CD8-positive, alpha-beta T cell (primary cell): ENCODE measurements at regions of chr18 and their contacts with region 1.

Region 1: GRCh38 chr18:46073474-46074331 is 1.6 kb upstream of the PSTPIP2 start:
- DNase-seq: peak in 8 of 9 experiments; percentile 27 to 79 (median 56)
- ATAC-seq: peak; percentile 66
- H3K4me3 ChIP-seq: no peak overlapping the region
- H3K4me3 Mint-ChIP-seq: peak overlapping the region; percentile 86
- H3K27ac ChIP-seq: no peak overlapping the region
- H3K27ac Mint-ChIP-seq: no peak overlapping the region
- H3K4me1 ChIP-seq: peaks cover 21% of the 10 kb centered on the region
- H3K4me1 Mint-ChIP-seq: peaks cover 40% of the 10 kb centered on the region
- H3K27me3 ChIP-seq: no peaks in the 10 kb centered on the region
- H3K27me3 Mint-ChIP-seq: no peaks in the 10 kb centered on the region
- CTCF ChIP-seq: peak; percentile 89

Region 2: DNA sequence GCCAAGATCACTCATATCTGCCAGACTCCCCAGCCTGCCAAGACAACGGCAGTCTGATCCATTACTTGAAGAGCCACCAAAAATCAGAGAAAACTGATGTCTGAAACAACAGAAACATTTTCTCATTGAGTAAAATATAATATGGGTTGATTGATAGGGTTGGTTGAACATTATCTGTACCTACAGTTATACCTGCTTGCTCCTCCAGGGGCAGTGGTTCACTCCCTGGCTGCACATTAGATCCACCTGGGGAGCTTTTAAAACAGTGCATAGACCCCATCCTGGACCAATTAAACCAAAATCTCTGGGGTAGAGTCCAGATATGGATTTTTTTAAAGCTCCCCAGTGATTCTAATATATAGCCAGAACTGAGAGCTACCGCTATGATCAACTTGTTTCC is 502.0 kb before region 1 on chr18:
- CTCF ChIA-PET with region 1: no interaction called
- POLR2A ChIA-PET with region 1: no interaction called
- intact Hi-C with region 1: no loop called
- DNase-seq: no peak
- ATAC-seq: no peak
- H3K4me3 ChIP-seq: no peak overlapping the region
- H3K4me3 Mint-ChIP-seq: no peak overlapping the region
- H3K27ac ChIP-seq: no peak overlapping the region
- H3K27ac Mint-ChIP-seq: no peak overlapping the region
- H3K4me1 ChIP-seq: no peaks in the 10 kb centered on the region
- H3K4me1 Mint-ChIP-seq: no peaks in the 10 kb centered on the region
- H3K27me3 ChIP-seq: no peaks in the 10 kb centered on the region
- H3K27me3 Mint-ChIP-seq: peaks cover 8% of the 10 kb centered on the region
- CTCF ChIP-seq: no peak

Region 3: GRCh38 chr18:45664824-45665763 is 408.6 kb before region 1 on chr18:
- CTCF ChIA-PET with region 1: interaction called, 28 read pairs
- POLR2A ChIA-PET with region 1: interaction called, 3 read pairs
- intact Hi-C with region 1: loop called (anchors 1 kb)
- DNase-seq: peak; percentile 37 to 83 (median 70)
- ATAC-seq: peak; percentile 83
- H3K4me3 ChIP-seq: no peak overlapping the region
- H3K4me3 Mint-ChIP-seq: peak overlapping the region; percentile 50
- H3K27ac ChIP-seq: peak overlapping the region in 1 of 2 experiments; percentile 46
- H3K27ac Mint-ChIP-seq: peak overlapping the region; percentile 74
- H3K4me1 ChIP-seq: peaks cover 51% of the 10 kb centered on the region
- H3K4me1 Mint-ChIP-seq: peaks cover 56% of the 10 kb centered on the region
- H3K27me3 ChIP-seq: no peaks in the 10 kb centered on the region
- H3K27me3 Mint-ChIP-seq: no peaks in the 10 kb centered on the region
- CTCF ChIP-seq: peak; percentile 92

Region 4: GRCh38 chr18:45879681-45880655 is 193.7 kb before region 1 on chr18:
- CTCF ChIA-PET with region 1: interaction called, 12 read pairs
- POLR2A ChIA-PET with region 1: no interaction called
- intact Hi-C with region 1: loop called in 1 of 2 experiments (anchors 2 kb)
- DNase-seq: peak; percentile 53 to 86 (median 69)
- ATAC-seq: peak; percentile 98
- H3K4me3 ChIP-seq: no peak overlapping the region
- H3K4me3 Mint-ChIP-seq: no peak overlapping the region
- H3K27ac ChIP-seq: no peak overlapping the region
- H3K27ac Mint-ChIP-seq: peak overlapping the region; percentile 69
- H3K4me1 ChIP-seq: peaks cover 7% of the 10 kb centered on the region
- H3K4me1 Mint-ChIP-seq: peaks cover 15% of the 10 kb centered on the region
- H3K27me3 ChIP-seq: no peaks in the 10 kb centered on the region
- H3K27me3 Mint-ChIP-seq: no peaks in the 10 kb centered on the region
- CTCF ChIP-seq: peak; percentile 99

Region 5: DNA sequence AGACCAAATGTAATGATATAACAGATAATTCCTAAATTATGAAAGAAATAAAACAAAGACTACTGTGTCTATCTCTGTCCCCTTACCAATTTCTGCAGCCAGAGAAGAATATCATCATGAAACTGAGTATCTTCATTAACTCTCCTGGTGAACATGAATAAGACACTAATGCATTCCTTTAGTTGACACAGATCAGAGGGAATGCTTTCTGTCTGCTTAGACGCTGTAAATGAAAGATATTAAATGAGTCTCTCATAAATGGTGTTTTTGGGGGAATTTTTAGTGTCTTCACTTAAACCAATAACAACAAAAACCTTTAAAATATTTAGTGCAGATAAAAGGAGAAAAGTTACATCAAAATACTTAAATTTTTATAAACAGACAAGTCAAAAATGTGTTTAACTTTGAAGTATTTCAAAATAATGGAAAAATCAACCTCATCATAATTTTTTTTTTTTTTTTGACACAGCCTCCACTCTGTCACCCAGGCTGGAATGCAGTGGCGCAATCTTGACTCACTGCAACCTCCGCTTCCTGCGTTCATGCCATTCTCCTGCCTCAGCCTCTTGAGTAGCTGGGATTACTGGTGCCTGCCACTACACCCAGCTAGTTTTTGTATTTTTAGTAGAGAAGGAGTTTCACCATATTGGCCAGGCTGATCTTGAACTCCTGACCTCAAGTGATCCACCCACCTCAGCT is 122.5 kb before region 1 on chr18:
- CTCF ChIA-PET with region 1: interaction called, 10 read pairs
- POLR2A ChIA-PET with region 1: no interaction called
- intact Hi-C with region 1: no loop called
- DNase-seq: no peak
- ATAC-seq: no peak
- H3K4me3 ChIP-seq: no peak overlapping the region
- H3K4me3 Mint-ChIP-seq: no peak overlapping the region
- H3K27ac ChIP-seq: no peak overlapping the region
- H3K27ac Mint-ChIP-seq: no peak overlapping the region
- H3K4me1 ChIP-seq: no peaks in the 10 kb centered on the region
- H3K4me1 Mint-ChIP-seq: peaks cover 17% of the 10 kb centered on the region
- H3K27me3 ChIP-seq: no peaks in the 10 kb centered on the region
- H3K27me3 Mint-ChIP-seq: no peaks in the 10 kb centered on the region
- CTCF ChIP-seq: no peak

Region 6: GRCh38 chr18:45993389-45993788 is 80.3 kb before region 1 on chr18:
- CTCF ChIA-PET with region 1: interaction called, 11 read pairs
- POLR2A ChIA-PET with region 1: interaction called, 3 read pairs
- intact Hi-C with region 1: no loop called
- DNase-seq: no peak
- ATAC-seq: no peak
- H3K4me3 ChIP-seq: no peak overlapping the region
- H3K4me3 Mint-ChIP-seq: no peak overlapping the region
- H3K27ac ChIP-seq: no peak overlapping the region
- H3K27ac Mint-ChIP-seq: no peak overlapping the region
- H3K4me1 ChIP-seq: peaks cover 20% of the 10 kb centered on the region
- H3K4me1 Mint-ChIP-seq: peaks cover 21% of the 10 kb centered on the region
- H3K27me3 ChIP-seq: no peaks in the 10 kb centered on the region
- H3K27me3 Mint-ChIP-seq: no peaks in the 10 kb centered on the region
- CTCF ChIP-seq: no peak

Region 7: GRCh38 chr18:46097801-46098615 is 24.3 kb after region 1 on chr18 and contains the start of gene ATP5F1A:
- CTCF ChIA-PET with region 1: interaction called, 20 read pairs
- POLR2A ChIA-PET with region 1: no interaction called
- intact Hi-C with region 1: loop called in 1 of 2 experiments (anchors 2 kb)
- DNase-seq: peak; percentile 67 to 93 (median 85)
- ATAC-seq: peak; percentile 83
- H3K4me3 ChIP-seq: peak within 1 kb of the TSS; percentile 60 to 95
- H3K4me3 Mint-ChIP-seq: peak within 1 kb of the TSS; percentile 98
- H3K27ac ChIP-seq: peak within 1 kb of the TSS; percentile 74 to 82
- H3K27ac Mint-ChIP-seq: peak within 1 kb of the TSS; percentile 98
- H3K4me1 ChIP-seq: peaks cover 33% of the 10 kb centered on the region
- H3K4me1 Mint-ChIP-seq: peaks cover 33% of the 10 kb centered on the region
- H3K27me3 ChIP-seq: no peaks in the 10 kb centered on the region
- H3K27me3 Mint-ChIP-seq: no peaks in the 10 kb centered on the region
- CTCF ChIP-seq: no peak
- total RNA-seq, gene ATP5F1A: 208 to 212 TPM